ENCODE measurements at regions of chr6 and their contacts with region 1.

Region 1: GRCh38 chr6:57221936-57222742 is at the start of gene RAB23:
- DNase-seq: peak; percentile 80
- H3K4me3 ChIP-seq: peak within 1 kb of the TSS; percentile 92 to 99
- H3K27ac ChIP-seq: peak within 1 kb of the TSS; percentile 89 to 93
- H3K4me1 ChIP-seq: no peaks in the 10 kb centered on the region
- H3K27me3 ChIP-seq: no peaks in the 10 kb centered on the region
- CTCF ChIP-seq: no peak
- POLR2A ChIP-seq: peak; percentile 80
- total RNA-seq, gene RAB23: 20.4 to 22.3 TPM

Region 2: DNA sequence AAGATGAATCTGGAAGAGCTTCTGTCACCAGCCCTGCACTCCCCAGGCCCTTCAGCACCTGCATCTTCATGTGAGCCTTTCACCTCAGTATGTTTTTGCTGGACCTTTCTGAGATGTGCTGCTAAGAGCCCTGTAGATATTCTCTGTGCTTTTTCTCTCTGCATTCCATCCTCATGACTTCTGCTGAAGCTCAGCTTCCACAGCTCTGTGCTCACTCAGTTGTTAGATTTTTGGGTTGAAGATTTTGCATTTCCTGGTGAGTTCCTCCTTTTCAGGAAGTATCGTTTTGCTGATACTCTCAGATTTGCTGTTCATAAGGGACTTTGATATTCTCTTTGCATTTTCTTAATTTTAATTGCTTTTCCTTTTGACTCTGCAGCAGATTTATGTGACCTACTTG is 157.3 kb before region 1 on chr6:
- intact Hi-C with region 1: no loop called
- DNase-seq: no peak
- H3K4me3 ChIP-seq: no peak overlapping the region
- H3K27ac ChIP-seq: no peak overlapping the region
- H3K4me1 ChIP-seq: no peaks in the 10 kb centered on the region
- H3K27me3 ChIP-seq: no peaks in the 10 kb centered on the region
- CTCF ChIP-seq: no peak
- POLR2A ChIP-seq: no peak

Region 3: DNA sequence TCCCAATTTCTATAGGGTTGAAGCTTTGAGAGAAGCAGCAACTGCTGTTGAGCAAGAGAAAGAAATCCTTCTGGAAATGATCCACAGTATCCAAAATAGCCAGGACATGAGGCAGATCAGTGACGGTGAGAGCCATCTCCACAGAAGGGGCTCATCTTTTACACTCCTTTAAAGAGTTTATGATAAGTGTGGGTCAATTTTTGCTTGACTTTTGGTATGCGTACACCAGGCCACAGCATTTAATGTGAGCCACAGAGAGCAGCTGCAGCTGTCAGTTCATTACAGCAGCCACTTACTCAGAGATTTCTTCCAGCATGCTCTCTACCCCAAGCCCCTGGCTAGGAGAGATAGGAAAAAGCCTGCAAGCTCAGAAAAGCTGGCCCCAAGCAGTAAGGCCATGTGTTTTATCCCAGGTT is 40.1 kb before region 1 on chr6:
- intact Hi-C with region 1: loop called (anchors 5 kb)
- DNase-seq: no peak
- H3K4me3 ChIP-seq: no peak overlapping the region
- H3K27ac ChIP-seq: peak overlapping the region in 1 of 2 donors; percentile 9
- H3K4me1 ChIP-seq: no peaks in the 10 kb centered on the region
- H3K27me3 ChIP-seq: no peaks in the 10 kb centered on the region
- CTCF ChIP-seq: no peak
- POLR2A ChIP-seq: no peak

Region 4: DNA sequence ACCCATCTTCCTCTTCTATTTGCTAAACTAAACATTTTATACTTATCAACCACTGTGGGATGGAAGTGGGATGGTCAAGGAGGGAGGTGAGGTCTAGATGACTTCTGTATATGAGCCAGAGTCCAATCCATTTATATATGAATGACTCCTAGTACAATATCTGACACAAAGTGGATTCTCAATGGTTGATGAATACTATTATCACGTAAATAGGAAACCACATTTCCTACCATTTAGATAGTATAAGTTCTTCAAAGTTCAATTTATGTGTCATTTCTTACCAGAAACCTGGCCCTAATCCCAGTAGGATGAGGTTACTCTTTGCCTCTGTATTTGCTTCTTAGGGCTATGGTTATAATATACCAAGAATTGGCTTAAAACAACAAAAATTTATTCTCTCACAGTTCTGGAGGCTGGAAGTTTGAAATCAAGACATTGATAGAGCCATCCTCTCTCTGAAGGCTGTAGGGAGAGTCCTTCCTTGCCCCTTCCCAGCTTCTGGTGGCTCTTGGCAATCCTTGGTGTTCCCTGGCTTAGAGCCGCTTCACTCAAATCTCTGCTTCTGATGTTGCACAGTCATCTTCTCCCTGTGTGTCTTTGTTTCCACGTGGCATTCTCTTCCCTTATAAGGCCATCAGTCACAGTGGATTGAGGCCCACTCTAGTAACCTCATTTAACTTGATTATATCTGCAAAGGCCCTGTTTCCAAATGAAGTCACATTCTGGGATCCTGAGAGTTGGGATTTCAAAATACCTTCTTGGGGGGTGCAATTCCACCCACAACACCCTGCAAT is 41.0 kb after region 1 on chr6:
- intact Hi-C with region 1: loop called (anchors 5 kb)
- DNase-seq: no peak
- H3K4me3 ChIP-seq: no peak overlapping the region
- H3K27ac ChIP-seq: peak overlapping the region; percentile 34 to 48
- H3K4me1 ChIP-seq: no peaks in the 10 kb centered on the region
- H3K27me3 ChIP-seq: no peaks in the 10 kb centered on the region
- CTCF ChIP-seq: no peak
- POLR2A ChIP-seq: no peak

Measured in prostate gland (tissue), 2 donors.